MCF 10A (cell line): ENCODE measurements at regions of chr1 and their contacts with region 1.

Region 1: GRCh38 chr1:155001675-155002463 is 733 bp upstream of the ZBTB7B start:
- DNase-seq: peak; percentile 100
- H3K4me3 Mint-ChIP-seq: peak overlapping the region; percentile 90
- H3K27ac Mint-ChIP-seq: peak overlapping the region; percentile 97
- H3K4me1 Mint-ChIP-seq: peaks cover 52% of the 10 kb centered on the region
- H3K27me3 Mint-ChIP-seq: no peaks in the 10 kb centered on the region
- CTCF ChIP-seq: peak; percentile 34

Region 2: DNA sequence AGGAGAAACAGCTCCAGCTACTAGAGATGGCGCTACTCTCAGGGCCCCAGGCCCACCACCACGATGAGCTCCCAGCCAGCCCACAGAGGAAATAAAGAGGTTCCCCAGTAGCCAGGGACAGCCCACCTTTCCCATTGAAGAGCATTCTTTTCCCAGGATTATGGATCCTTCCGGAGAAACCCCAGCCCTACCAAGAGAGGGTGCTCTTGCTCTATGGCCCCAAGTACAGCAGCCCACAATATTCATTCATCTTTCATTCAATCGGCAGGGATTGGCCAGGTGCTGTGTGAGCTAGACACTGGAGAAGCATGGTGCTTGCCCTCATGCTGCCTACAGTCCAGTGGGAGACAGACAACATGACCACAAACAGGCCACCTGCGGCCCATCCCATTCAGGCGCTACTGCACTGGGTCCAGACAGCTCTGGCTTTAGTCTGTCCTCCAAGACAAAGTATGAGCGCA is 95.2 kb before region 1 on chr1:
- CTCF ChIA-PET with region 1: no interaction called
- POLR2A ChIA-PET with region 1: no interaction called
- intact Hi-C with region 1: loop called (anchors 1 kb)
- DNase-seq: peak; percentile 57
- H3K4me3 Mint-ChIP-seq: no peak overlapping the region
- H3K27ac Mint-ChIP-seq: no peak overlapping the region
- H3K4me1 Mint-ChIP-seq: no peaks in the 10 kb centered on the region
- H3K27me3 Mint-ChIP-seq: no peaks in the 10 kb centered on the region
- CTCF ChIP-seq: peak; percentile 45

Region 3: GRCh38 chr1:154955718-154956543 is 45.9 kb before region 1 on chr1 and contains the start of gene PBXIP1:
- CTCF ChIA-PET with region 1: interaction called, 22 read pairs
- POLR2A ChIA-PET with region 1: interaction called, 1,917 read pairs
- intact Hi-C with region 1: loop called (anchors 1 kb)
- DNase-seq: peak; percentile 97
- H3K4me3 Mint-ChIP-seq: peak within 1 kb of the TSS; percentile 88
- H3K27ac Mint-ChIP-seq: peak within 1 kb of the TSS; percentile 68
- H3K4me1 Mint-ChIP-seq: peaks cover 43% of the 10 kb centered on the region
- H3K27me3 Mint-ChIP-seq: no peaks in the 10 kb centered on the region
- CTCF ChIP-seq: peak; percentile 24
- total RNA-seq, gene PBXIP1: 11.3 TPM in 2 replicates

Region 4: DNA sequence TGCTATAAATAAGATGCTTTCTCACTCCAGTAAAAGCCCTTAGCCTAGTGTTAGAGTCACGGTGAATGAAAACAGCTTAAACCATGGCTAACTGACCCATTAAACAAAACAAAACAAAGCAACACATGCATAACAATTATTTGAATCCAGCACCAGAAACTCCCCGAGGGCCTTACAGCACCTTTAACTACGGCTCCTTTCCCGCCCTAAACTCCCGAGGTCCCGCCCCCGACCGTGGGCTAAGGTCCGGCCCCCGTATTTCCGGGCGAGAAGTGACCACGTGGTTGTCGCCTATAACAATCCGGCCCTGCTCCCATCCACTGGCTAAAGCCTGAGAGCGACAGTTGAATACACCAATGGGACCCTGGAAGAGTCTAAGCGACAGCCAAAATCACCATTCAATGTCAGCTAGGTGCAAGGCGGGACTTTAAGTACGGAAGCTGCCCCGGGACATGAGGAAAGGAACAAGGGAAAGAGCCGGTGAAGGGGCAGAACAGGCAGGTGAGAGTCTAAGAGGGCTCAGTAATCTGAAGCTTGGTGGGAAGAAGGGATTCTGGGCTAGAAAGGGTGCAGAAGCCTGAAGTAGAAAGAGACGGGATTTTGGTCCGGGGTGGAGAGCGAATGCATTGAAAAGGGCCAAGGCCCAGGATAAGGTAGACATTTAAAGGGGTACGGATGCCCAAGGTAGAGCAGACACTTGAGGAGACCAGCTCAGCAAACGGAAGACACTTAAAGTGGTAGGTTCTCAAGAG is 18.8 kb before region 1 on chr1 and contains the start of gene FLAD1:
- CTCF ChIA-PET with region 1: interaction called, 118 read pairs
- POLR2A ChIA-PET with region 1: interaction called, 1,917 read pairs
- intact Hi-C with region 1: no loop called
- DNase-seq: peak; percentile 100
- H3K4me3 Mint-ChIP-seq: no peak within 1 kb of the TSS
- H3K27ac Mint-ChIP-seq: no peak within 1 kb of the TSS
- H3K4me1 Mint-ChIP-seq: peaks cover 6% of the 10 kb centered on the region
- H3K27me3 Mint-ChIP-seq: no peaks in the 10 kb centered on the region
- CTCF ChIP-seq: no peak
- total RNA-seq, gene FLAD1: 65.4 and 91.1 TPM in 2 replicates

Region 5: DNA sequence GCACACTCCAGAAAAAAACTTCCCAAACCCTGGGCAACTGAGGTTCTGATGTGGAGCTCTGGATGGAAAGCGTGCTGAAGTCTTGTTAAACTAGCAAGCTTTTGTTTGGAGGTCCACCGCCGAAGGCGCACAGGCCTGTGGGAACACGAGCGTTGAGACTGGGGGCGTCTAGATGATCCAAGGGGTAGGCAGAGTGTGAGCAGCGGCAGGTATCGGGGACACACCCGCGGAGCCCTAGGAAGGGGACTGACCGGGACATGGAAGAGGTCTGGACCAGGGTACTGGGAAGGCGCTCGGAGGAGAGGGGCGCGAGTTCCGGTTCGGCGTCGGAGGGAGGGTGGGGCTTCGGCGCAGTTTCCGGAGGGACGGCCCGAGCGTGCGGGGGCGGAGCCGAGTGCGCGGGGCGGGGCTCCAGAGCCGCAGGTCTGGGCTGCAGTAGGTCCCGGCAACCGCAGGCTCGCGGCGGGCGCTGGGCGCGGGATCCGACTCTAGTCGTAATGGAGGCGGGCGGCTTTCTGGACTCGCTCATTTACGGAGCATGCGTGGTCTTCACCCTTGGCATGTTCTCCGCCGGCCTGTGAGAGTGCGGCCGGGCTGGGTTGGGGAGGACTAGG is 133.7 kb after region 1 on chr1 and contains the start of gene SLC50A1:
- CTCF ChIA-PET with region 1: no interaction called
- POLR2A ChIA-PET with region 1: interaction called, 10 read pairs
- intact Hi-C with region 1: no loop called
- DNase-seq: peak; percentile 94
- H3K4me3 Mint-ChIP-seq: peak within 1 kb of the TSS; percentile 80
- H3K27ac Mint-ChIP-seq: peak within 1 kb of the TSS; percentile 94
- H3K4me1 Mint-ChIP-seq: peaks cover 50% of the 10 kb centered on the region
- H3K27me3 Mint-ChIP-seq: no peaks in the 10 kb centered on the region
- CTCF ChIP-seq: no peak
- total RNA-seq, gene SLC50A1: 91.2 and 97.8 TPM in 2 replicates

Region 6: GRCh38 chr1:155504207-155504606 is 502.3 kb after region 1 on chr1:
- CTCF ChIA-PET with region 1: no interaction called
- POLR2A ChIA-PET with region 1: no interaction called
- intact Hi-C with region 1: no loop called
- DNase-seq: peak; percentile 63
- H3K4me3 Mint-ChIP-seq: no peak overlapping the region
- H3K27ac Mint-ChIP-seq: no peak overlapping the region
- H3K4me1 Mint-ChIP-seq: peaks cover 33% of the 10 kb centered on the region
- H3K27me3 Mint-ChIP-seq: no peaks in the 10 kb centered on the region
- CTCF ChIP-seq: peak; percentile 61

Region 7: GRCh38 chr1:155527677-155528076 is 525.8 kb after region 1 on chr1:
- CTCF ChIA-PET with region 1: no interaction called
- POLR2A ChIA-PET with region 1: no interaction called
- intact Hi-C with region 1: no loop called
- DNase-seq: peak; percentile 42
- H3K4me3 Mint-ChIP-seq: no peak overlapping the region
- H3K27ac Mint-ChIP-seq: no peak overlapping the region
- H3K4me1 Mint-ChIP-seq: peaks cover 17% of the 10 kb centered on the region
- H3K27me3 Mint-ChIP-seq: no peaks in the 10 kb centered on the region
- CTCF ChIP-seq: no peak